Caco-2 (cell line): ENCODE measurements at regions of chr5 and their contacts with region 1.

Region 1: GRCh38 chr5:14767735-14768507 is 103.4 kb downstream of the OTULIN start:
- DNase-seq: no peak
- H3K4me3 ChIP-seq: no peak overlapping the region
- H3K4me3 Mint-ChIP-seq: no peak overlapping the region
- H3K27ac Mint-ChIP-seq: no peak overlapping the region
- H3K4me1 ChIP-seq: no peaks in the 10 kb centered on the region
- H3K4me1 Mint-ChIP-seq: no peaks in the 10 kb centered on the region
- H3K27me3 ChIP-seq: no peaks in the 10 kb centered on the region
- H3K27me3 Mint-ChIP-seq: peaks cover 4% of the 10 kb centered on the region
- CTCF ChIP-seq: no peak

Region 2: DNA sequence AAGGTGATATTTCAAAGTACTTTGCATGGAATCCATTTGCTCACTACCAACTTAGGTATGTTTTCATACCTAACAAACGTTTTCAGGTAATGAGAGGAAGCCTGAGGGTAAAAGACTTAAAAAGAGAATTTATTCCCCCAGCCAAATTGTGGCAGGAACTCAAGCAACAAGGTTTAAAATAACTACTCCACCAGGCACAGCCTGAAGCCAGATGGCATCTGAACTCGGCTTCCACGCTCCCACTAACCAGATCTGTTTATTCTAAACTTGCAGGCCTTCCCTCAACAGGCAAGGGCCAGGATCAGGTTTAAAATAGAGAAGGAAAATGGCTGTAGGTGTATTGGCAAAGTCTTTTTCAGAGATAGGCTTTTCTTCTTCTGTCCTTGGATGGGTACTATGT is 14.0 kb before region 1 on chr5:
- CTCF ChIA-PET with region 1: no interaction called
- POLR2A ChIA-PET with region 1: no interaction called
- intact Hi-C with region 1: loop called (anchors 1 kb)
- DNase-seq: no peak
- H3K4me3 ChIP-seq: no peak overlapping the region
- H3K4me3 Mint-ChIP-seq: no peak overlapping the region
- H3K27ac Mint-ChIP-seq: no peak overlapping the region
- H3K4me1 ChIP-seq: peaks cover 16% of the 10 kb centered on the region
- H3K4me1 Mint-ChIP-seq: peaks cover 22% of the 10 kb centered on the region
- H3K27me3 ChIP-seq: no peaks in the 10 kb centered on the region
- H3K27me3 Mint-ChIP-seq: peaks cover 2% of the 10 kb centered on the region
- CTCF ChIP-seq: no peak